Heart right ventricle (tissue), 16 donors: ENCODE measurements at regions of chr10 and their contacts with region 1.

Region 1: DNA sequence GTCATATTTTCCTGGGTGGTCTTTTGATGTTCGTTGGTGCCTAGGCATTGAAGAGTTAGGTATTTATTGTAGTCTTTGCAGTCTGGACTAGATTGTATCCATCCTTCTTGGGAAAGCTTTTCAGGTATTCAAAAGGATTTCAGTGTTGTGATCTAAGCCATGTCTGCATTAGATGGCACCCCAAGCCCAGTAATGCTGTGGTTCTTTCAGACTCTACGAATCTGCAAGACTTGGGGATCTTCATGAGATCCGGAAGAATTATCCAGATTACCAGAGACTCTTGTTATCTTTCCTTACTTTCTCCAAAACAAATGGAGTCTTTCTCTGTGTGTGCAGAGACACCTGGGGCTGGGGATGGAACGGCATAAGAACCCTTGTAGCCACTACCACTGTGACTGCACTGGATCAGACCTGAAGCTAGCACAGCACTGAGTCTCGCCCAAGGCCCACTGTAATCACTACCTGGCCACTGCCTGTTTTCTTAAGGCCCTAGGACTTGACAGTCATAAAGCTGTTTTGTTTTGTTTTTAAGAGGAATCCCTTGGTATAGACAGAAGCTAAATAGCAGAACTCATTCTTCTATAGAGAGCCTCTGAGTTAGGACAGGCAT is 75.5 kb downstream of the MARCHF5 start:
- DNase-seq: no peak
- ATAC-seq: no peak
- H3K4me3 ChIP-seq: no peak overlapping the region
- H3K27ac ChIP-seq: no peak overlapping the region
- H3K4me1 ChIP-seq: no peaks in the 10 kb centered on the region
- H3K27me3 ChIP-seq: no peaks in the 10 kb centered on the region
- CTCF ChIP-seq: peak in 2 of 9 donors; percentile 26 to 31

Region 2: DNA sequence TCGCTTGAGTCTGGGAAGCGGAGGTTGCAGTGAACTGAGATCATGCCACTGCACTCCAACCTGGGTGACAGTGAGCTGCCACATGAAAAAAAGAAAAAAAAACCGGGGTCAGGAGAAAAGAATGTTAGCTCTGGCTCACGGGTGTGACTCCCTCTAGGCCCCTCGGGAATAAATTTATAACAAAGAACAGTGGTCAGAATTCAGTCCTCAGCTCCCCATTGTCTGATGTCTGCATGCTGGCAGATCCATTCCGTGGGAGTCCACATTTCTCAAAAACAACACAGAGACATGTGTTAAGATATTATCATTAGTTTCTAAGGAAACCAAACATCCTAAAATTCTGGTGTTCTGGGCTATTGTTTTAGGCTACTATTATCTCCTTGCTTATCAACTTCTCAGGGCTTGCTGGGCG is 15.0 kb after region 1 on chr10:
- intact Hi-C with region 1: loop called in 1 of 10 experiments (anchors 2 kb)
- DNase-seq: peak in 1 of 2 donors; percentile 55
- ATAC-seq: peak; percentile 75 to 97 (median 86)
- H3K4me3 ChIP-seq: no peak overlapping the region
- H3K27ac ChIP-seq: peak overlapping the region in 6 of 10 donors; percentile 45 to 74 (median 64)
- H3K4me1 ChIP-seq: peaks cover 0 to 23% (median 5%) of the 10 kb centered on the region in 9 donors
- H3K27me3 ChIP-seq: no peaks in the 10 kb centered on the region
- CTCF ChIP-seq: no peak